Naive thymus-derived CD8-positive, alpha-beta T cell (primary cell): ENCODE measurements at regions of chr20 and their contacts with region 1.

Region 1: DNA sequence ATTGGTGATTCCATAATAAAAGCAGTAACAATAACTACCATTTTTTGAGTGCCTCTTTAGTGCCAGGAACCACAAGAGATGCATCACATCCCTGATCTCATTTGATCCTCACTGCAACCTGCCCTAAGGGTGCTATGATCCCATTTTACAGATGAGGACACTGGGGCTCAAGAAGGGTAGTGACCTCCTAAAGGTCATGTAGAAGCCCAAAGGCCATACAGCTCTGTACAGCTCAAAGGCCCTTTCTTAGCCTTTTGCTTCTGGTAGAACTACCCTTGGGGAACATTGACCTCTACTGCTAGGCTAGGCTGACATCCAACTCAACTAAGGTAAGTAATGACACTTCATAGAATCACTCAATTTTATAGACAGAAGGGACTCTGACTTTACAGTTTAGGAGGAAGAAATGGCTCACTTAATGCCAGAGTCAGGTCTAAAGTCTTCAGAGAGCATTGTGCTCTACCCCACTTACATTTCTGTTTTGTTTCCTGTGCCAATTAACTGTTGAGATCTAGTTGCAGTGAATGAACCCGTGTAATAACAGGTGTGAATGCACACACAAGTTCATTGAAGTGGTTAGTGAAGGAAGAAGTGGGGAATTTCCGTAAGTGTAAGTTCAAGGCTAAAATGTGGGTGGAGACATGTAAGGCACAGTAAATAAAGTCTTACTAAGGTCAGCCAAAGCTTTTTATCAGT is 10.7 kb downstream of the SLC9A8 start:
- DNase-seq: peak in 5 of 10 donors; percentile 7 to 74 (median 34)
- ATAC-seq: peak; percentile 94
- H3K4me3 Mint-ChIP-seq: peak overlapping the region; percentile 20 to 75 (median 62)
- H3K27ac Mint-ChIP-seq: peak overlapping the region; percentile 30 to 92 (median 84)
- H3K4me1 Mint-ChIP-seq: peaks cover 20 to 57% (median 45%) of the 10 kb centered on the region in 4 donors
- H3K27me3 Mint-ChIP-seq: no peaks in the 10 kb centered on the region

Region 2: DNA sequence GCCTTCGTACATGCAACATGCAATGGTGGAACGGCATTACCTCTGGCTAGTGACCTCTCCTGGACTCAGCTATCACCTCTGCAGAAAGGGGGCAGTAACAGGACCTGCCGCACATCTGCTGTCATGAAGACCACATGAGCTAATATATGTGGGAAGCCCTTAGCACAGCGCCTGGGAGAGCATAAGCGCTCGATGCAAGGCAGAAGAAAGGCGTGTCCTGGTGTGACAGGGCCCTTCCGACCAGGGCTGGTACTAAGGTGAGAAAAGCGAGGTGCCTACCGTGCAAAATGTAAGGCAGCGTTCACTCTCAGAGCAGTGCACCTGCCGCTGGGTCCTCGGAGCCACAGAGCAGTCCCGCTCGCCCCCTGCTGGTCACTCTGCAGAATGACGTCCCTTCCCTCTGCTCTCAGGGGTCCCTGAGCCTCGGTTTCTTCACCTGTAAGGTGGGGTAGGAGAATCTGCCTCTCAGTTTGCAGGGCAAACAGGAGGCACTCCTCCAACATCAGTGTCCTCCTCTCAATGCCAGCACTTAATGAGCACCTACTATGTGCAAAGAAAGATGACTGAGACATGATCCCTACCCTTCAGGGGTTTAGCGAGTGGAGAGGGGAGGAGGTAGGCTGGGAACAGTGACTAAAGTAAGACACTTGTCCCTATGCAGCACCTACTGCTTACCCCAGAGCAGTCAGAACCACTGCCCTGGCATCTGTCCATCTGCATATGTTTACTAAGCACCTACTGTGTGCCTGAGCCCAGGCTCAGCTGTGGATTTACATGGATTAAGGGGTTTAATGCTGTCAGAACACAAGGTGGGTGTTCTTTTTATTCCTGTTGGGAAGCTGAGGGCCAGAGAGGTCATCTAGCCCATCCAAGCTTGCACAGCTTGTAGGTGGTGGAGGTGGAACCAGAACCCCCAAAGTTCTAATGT is 214.3 kb before region 1 on chr20:
- POLR2A ChIA-PET with region 1: no interaction called
- DNase-seq: peak; percentile 42 to 78 (median 70)
- ATAC-seq: peak; percentile 85 to 88
- H3K4me3 Mint-ChIP-seq: peak overlapping the region; percentile 48 to 79 (median 70)
- H3K27ac Mint-ChIP-seq: peak overlapping the region in 4 of 10 donors; percentile 9 to 71 (median 38)
- H3K4me1 Mint-ChIP-seq: peaks cover 7 to 20% (median 16%) of the 10 kb centered on the region in 4 donors
- H3K27me3 Mint-ChIP-seq: peaks cover 6 to 24% (median 8%) of the 10 kb centered on the region in 5 donors

Region 3: GRCh38 chr20:49786671-49787375 is 36.5 kb before region 1 on chr20:
- POLR2A ChIA-PET with region 1: no interaction called
- DNase-seq: no peak
- ATAC-seq: no peak
- H3K4me3 Mint-ChIP-seq: peak overlapping the region in 1 of 10 donors; percentile 1
- H3K27ac Mint-ChIP-seq: no peak overlapping the region
- H3K4me1 Mint-ChIP-seq: peaks cover 2 to 37% (median 5%) of the 10 kb centered on the region in 4 donors
- H3K27me3 Mint-ChIP-seq: peaks cover 0 to 2% (median 0%) of the 10 kb centered on the region in 5 donors

Region 4: GRCh38 chr20:49812463-49813304 is 10.6 kb before region 1 on chr20 and contains the start of gene SLC9A8:
- POLR2A ChIA-PET with region 1: interaction called, 14 read pairs
- DNase-seq: peak; percentile 74 to 89 (median 82)
- ATAC-seq: peak; percentile 90 to 92
- H3K4me3 Mint-ChIP-seq: peak within 1 kb of the TSS; percentile 90 to 96 (median 94)
- H3K27ac Mint-ChIP-seq: peak within 1 kb of the TSS; percentile 96 to 99 (median 98)
- H3K4me1 Mint-ChIP-seq: peaks cover 17 to 43% (median 32%) of the 10 kb centered on the region in 4 donors
- H3K27me3 Mint-ChIP-seq: no peaks in the 10 kb centered on the region
- polyA plus RNA-seq, gene SLC9A8: 4.7 to 9.0 (median 6.0) TPM

Region 5: GRCh38 chr20:49833483-49833882 is 10.2 kb after region 1 on chr20:
- POLR2A ChIA-PET with region 1: no interaction called
- DNase-seq: no peak
- ATAC-seq: no peak
- H3K4me3 Mint-ChIP-seq: no peak overlapping the region
- H3K27ac Mint-ChIP-seq: peak overlapping the region in 1 of 10 donors; percentile 38
- H3K4me1 Mint-ChIP-seq: peaks cover 13 to 15% (median 14%) of the 10 kb centered on the region in 4 donors
- H3K27me3 Mint-ChIP-seq: no peaks in the 10 kb centered on the region

Region 6: GRCh38 chr20:49865559-49865958 is 42.3 kb after region 1 on chr20:
- POLR2A ChIA-PET with region 1: no interaction called
- DNase-seq: no peak
- ATAC-seq: no peak
- H3K4me3 Mint-ChIP-seq: no peak overlapping the region
- H3K27ac Mint-ChIP-seq: no peak overlapping the region
- H3K4me1 Mint-ChIP-seq: peaks cover 0 to 11% (median 4%) of the 10 kb centered on the region in 4 donors
- H3K27me3 Mint-ChIP-seq: no peaks in the 10 kb centered on the region